ENCODE measurements at regions of chr11 and their contacts with region 1.

Region 1: DNA sequence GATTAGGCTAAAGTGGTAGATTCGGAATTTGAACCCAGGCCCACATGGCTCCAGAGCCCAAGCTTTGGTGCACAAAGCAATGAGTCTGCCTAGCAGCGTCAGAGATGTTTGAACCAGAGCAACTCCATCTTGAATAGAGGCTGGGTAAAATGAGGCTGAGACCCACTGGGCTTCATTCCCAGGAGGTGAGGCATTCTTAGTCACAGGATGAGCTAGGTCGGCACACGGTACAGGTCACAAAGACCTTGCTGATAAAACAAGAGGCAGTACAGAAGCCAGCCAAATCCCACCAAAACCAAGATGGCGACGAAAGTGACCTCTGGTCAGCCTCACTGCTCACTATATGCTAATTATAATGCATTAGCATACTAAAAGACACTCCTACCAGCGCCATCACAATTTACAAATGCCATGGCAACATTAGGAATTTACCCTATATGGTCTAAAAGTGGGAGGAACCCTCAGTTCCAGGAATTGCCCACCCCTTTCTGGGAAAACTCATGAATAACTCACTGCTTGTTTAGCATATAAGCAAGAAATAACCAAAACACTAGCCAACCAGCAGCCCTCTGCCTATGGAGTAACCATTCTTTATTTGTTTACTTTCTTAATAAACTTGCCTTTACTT is 40.3 kb upstream of the DAGLA start:
- DNase-seq: no peak
- ATAC-seq: no peak

Region 2: GRCh38 chr11:61446211-61446651 is 193.7 kb before region 1 on chr11:
- intact Hi-C with region 1: loop called (anchors 10 kb)
- DNase-seq: peak; percentile 95
- ATAC-seq: peak; percentile 96